Motor neuron (in vitro differentiated cells): ENCODE measurements at regions of chr5 and their contacts with region 1.

Region 1: DNA sequence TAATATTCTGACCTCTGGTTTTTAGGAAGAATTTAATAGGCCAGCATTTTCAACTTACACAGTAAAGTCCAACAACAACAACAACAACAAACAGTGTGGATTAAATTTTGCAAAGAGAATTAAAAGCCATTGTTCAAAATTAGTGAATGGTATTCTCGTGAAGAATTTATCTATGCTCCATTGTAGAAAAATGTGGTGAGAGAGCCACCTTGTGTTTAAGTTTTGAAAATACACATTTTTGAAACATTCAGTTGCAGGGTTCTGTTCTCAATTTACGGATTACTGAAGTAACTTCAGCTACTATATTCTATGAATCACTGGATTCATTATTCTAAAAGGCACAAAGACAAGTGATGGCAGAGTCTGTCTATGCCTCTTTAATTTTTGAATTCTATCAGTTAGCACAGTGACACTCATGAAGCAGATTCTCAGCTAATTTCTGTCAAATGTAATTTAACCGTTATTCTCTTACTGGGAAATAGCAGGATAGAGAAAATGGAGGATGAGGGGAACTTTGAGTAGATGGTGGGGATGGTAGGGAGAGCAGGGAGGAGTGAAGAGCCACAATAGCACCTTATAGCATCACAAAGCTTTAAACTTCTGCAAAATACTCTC is 11.0 kb downstream of the CCDC152 start:
- ATAC-seq: peak in 3 of 8 experiments; percentile 50 to 57 (median 52)
- H3K4me3 ChIP-seq: no peak overlapping the region
- H3K27ac ChIP-seq: no peak overlapping the region
- H3K4me1 ChIP-seq: no peaks in the 10 kb centered on the region

Region 2: GRCh38 chr5:41856644-41857491 is 910.7 kb before region 1 on chr5:
- in situ Hi-C with region 1: loop called in 4 of 9 experiments (anchors 10 to 25 kb)
- ATAC-seq: peak; percentile 78 to 93 (median 86)
- H3K4me3 ChIP-seq: no peak overlapping the region
- H3K27ac ChIP-seq: no peak overlapping the region
- H3K4me1 ChIP-seq: no peaks in the 10 kb centered on the region

Region 3: GRCh38 chr5:41869739-41870626 is 897.6 kb before region 1 on chr5 and contains the start of gene OXCT1:
- in situ Hi-C with region 1: loop called in 3 of 9 experiments (anchors 25 kb)
- ATAC-seq: peak; percentile 82 to 90 (median 88)
- H3K4me3 ChIP-seq: peak within 1 kb of the TSS; percentile 58 to 87 (median 71)
- H3K27ac ChIP-seq: peak within 1 kb of the TSS; percentile 59 to 86
- H3K4me1 ChIP-seq: peaks cover 4 to 10% of the 10 kb centered on the region in 2 donors
- total RNA-seq, gene OXCT1: 6.6 to 55.5 (median 36.9) TPM

Region 4: GRCh38 chr5:42005561-42006153 is 761.9 kb before region 1 on chr5:
- in situ Hi-C with region 1: loop called in 2 of 9 experiments (anchors 25 kb)
- ATAC-seq: peak in 3 of 8 experiments; percentile 34 to 49 (median 38)
- H3K4me3 ChIP-seq: no peak overlapping the region
- H3K27ac ChIP-seq: no peak overlapping the region
- H3K4me1 ChIP-seq: no peaks in the 10 kb centered on the region